Ascending aorta (tissue), 2 donors: ENCODE measurements at regions of chr11 and their contacts with region 1.

Region 1: DNA sequence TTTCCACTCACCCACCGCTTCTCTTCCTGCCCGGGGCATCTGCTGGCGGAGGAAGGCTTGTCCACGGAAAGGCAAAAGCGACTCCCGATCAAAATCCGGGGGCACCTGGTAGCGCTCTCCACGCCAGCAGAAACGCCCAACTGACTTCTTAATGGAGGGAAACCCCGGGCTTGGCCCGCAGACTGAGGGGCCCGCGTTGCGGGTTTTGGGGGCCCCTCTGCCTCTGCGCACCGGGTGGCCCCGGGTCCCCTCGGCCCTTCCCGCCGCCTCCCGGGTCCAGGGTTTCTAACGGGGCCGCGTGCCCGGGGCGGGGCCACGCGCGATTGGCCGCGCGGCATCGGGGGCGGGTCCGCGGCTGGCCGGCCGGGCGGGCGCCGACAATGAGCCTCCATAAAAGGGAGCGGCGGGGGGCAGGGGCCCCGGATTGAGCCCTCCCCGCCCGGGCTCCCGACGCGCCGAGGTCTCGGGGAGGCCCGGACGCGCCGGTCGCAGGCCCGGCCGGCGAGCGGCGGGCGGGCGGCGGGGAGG is at the start of gene SPINDOC:
- DNase-seq: peak; percentile 28 to 88
- H3K4me3 ChIP-seq: peak within 1 kb of the TSS; percentile 95
- H3K27ac ChIP-seq: peak within 1 kb of the TSS; percentile 71 to 80
- H3K4me1 ChIP-seq: peaks cover 3 to 15% of the 10 kb centered on the region in 2 donors
- H3K27me3 ChIP-seq: no peaks in the 10 kb centered on the region
- CTCF ChIP-seq: no peak
- total RNA-seq, gene SPINDOC: 5.0 TPM

Region 2: GRCh38 chr11:63671322-63672155 is 141.6 kb before region 1 on chr11 and contains the start of gene ATL3:
- intact Hi-C with region 1: loop called (anchors 10 kb)
- DNase-seq: peak; percentile 89 to 99
- H3K4me3 ChIP-seq: peak within 1 kb of the TSS; percentile 93 to 95
- H3K27ac ChIP-seq: peak within 1 kb of the TSS; percentile 100
- H3K4me1 ChIP-seq: peaks cover 13 to 36% of the 10 kb centered on the region in 2 donors
- H3K27me3 ChIP-seq: no peaks in the 10 kb centered on the region
- CTCF ChIP-seq: peak in 1 of 3 experiments; percentile 20
- total RNA-seq, gene ATL3: 77.3 TPM

Region 3: DNA sequence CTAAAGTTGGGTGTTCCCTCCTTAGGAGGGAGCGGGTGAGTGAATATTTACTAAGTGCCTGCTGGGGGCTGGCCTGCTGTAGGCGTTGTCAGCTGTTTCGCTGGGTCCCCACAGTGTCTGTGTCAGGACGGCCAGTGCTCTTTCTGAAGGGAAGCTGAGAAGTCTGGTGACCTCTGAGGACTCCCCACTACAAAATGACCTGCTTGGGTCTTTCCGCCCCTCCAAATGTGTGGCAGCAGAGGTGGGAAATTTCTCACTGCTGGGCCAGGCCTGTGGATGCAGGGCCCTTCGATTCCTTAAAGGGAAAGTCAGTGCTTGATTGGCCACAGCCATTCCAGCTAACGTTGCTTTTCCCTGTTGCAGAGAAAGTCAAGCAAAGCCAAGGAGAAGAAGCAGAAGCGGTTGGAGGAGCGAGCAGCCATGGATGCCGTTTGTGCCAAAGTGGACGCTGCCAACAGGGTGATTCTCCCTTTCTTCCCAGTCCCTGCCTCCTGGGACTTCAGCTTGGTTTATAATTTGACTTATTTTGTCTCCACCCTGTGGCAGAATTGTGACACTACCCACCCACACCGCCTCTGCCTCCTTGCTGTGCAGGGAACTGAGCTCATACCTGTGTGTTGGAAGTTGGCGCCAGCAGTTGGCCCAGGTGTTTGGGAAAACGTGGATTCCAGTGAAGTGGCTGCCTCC is 132.5 kb after region 1 on chr11:
- intact Hi-C with region 1: no loop called
- DNase-seq: peak in 1 of 2 donors; percentile 86
- H3K4me3 ChIP-seq: peak overlapping the region; percentile 27 to 33
- H3K27ac ChIP-seq: peak overlapping the region; percentile 64 to 75
- H3K4me1 ChIP-seq: peaks cover 3 to 9% of the 10 kb centered on the region in 2 donors
- H3K27me3 ChIP-seq: no peaks in the 10 kb centered on the region
- CTCF ChIP-seq: peak; percentile 75 to 84 (median 81)